IMR-90 (cell line): ENCODE measurements at regions of chr17 and their contacts with region 1.

Region 1: DNA sequence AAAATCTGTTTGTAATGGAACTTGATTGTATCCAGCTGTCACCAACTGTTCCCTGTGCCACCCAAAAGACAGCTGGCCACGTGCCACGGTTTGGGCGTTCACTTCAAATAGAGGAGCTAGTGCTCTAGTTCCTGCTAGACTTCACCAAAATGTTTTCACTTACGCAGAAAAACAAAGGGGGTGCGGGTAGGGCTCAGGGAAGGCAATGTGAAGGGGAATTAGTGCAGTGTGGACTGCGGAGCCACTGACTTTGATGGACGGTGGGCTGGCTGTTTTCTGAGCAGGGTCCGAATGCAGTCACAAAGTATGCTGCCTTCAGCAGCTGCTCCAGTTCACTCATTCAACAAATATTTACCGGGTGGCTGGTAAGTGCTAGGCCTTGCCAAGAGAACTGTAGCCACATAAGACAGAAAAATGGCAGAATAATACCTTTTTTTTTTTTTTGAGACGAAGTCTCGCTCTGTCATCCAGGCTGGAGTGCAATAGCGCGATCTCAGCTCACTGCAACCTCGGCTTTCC is 7.6 kb upstream of the CYTH1 start:
- DNase-seq: peak; percentile 89
- ATAC-seq: peak; percentile 74
- H3K4me3 ChIP-seq: no peak overlapping the region
- H3K27ac ChIP-seq: peak overlapping the region; percentile 74; the same call in 1 of the 2 replicates
- H3K4me1 ChIP-seq: peaks cover 27% of the 10 kb centered on the region
- H3K27me3 ChIP-seq: no peaks in the 10 kb centered on the region
- CTCF ChIP-seq: no peak
- POLR2A ChIP-seq: no peak
- RAD21 ChIP-seq: no peak

Region 2: GRCh38 chr17:78808163-78808562 is 18.4 kb after region 1 on chr17:
- CTCF ChIA-PET with region 1: no interaction called
- POLR2A ChIA-PET with region 1: no interaction called
- dilution Hi-C with region 1: no loop called
- in situ Hi-C with region 1: no loop called
- intact Hi-C with region 1: loop called (anchors 2 kb)
- DNase-seq: peak; percentile 39
- ATAC-seq: peak; percentile 84
- H3K4me3 ChIP-seq: no peak overlapping the region
- H3K27ac ChIP-seq: no peak overlapping the region
- H3K4me1 ChIP-seq: no peaks in the 10 kb centered on the region
- H3K27me3 ChIP-seq: no peaks in the 10 kb centered on the region
- CTCF ChIP-seq: no peak
- POLR2A ChIP-seq: no peak
- RAD21 ChIP-seq: no peak

Region 3: GRCh38 chr17:78865682-78866390 is 76.1 kb after region 1 on chr17:
- CTCF ChIA-PET with region 1: no interaction called
- POLR2A ChIA-PET with region 1: no interaction called
- dilution Hi-C with region 1: no loop called
- in situ Hi-C with region 1: no loop called
- intact Hi-C with region 1: no loop called
- DNase-seq: peak; percentile 80
- ATAC-seq: peak; percentile 48
- H3K4me3 ChIP-seq: no peak overlapping the region
- H3K27ac ChIP-seq: peak overlapping the region; percentile 21; the same call in 1 of the 2 replicates
- H3K4me1 ChIP-seq: peaks cover 18% of the 10 kb centered on the region
- H3K27me3 ChIP-seq: no peaks in the 10 kb centered on the region
- CTCF ChIP-seq: peak; percentile 81
- POLR2A ChIP-seq: no peak
- RAD21 ChIP-seq: peak; percentile 84